ENCODE measurements at regions of chr1 and their contacts with region 1.

Region 1: DNA sequence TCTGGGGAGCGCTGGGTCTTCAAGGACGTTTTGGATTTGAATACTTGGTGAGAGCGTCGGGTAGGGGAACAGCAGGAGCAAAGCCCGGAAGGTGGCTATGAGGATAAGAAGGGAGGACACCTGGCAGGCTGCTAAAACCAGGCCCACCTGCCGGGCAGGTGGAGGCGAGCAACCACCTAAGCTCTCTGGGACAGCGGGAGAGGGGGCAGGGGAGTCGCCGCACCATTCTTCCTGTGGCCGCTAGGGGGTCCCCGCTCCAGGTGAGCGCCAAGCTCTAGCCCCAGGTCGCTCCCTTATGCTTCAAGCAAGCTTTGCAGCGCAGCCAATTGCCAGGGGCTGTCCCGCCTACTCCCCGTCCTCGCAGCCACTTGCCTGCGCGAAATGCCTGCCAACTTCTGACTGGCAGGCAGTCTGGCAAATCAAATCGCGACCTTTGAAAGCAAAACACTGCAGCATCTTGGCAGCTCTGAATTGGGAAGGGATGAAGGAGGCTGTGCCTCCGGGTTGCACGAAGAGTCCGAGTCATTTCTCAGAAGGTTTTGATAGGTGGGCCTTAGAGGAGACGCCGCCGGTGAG is at the start of gene NIPAL3:
- DNase-seq: peak; percentile 97
- CTCF ChIP-seq: peak; percentile 85

Region 2: GRCh38 chr1:24403806-24404205 is 11.6 kb before region 1 on chr1:
- CTCF ChIA-PET with region 1: interaction called, 29 read pairs
- POLR2A ChIA-PET with region 1: no interaction called
- DNase-seq: no peak
- CTCF ChIP-seq: no peak

Region 3: DNA sequence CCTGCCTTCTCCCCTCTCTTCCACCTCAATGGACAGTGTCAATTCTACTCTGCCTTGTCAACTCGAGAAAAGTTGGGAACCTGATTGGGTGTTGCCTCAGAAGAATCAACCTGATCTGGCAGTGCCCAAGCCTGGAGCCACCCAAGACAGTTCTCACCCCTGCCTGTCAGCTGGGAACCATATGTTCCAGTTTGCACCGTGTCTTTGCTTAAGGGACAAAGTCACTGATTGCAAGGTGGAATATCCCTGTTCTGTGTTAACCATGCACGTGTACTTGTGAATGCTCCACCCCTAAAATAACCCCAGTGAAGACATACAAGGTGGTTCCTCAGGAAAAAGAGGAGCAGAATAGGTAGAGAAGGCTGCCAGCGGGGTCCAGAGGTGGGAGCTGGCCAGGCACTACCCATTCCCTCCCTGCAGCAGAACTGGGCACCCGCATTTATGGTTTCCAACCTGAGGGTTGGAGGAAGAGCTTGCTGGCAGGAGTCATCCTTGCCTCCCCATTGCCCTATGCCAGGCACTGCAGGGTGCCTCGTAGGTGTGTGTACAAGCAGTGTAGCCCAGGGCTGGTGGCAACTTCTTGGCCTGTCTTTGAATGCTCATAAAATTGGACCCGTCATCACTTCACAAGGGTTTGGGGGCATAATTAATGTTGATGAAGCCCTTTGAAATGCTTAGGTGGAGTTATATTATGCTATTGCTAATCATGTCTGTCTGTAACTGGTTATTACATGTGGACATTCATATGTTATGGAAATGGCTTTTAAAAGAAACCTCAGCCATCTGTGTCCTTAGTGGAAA is 11.5 kb after region 1 on chr1:
- CTCF ChIA-PET with region 1: interaction called, 44 read pairs
- POLR2A ChIA-PET with region 1: no interaction called
- DNase-seq: peak; percentile 1
- CTCF ChIP-seq: no peak

Region 4: DNA sequence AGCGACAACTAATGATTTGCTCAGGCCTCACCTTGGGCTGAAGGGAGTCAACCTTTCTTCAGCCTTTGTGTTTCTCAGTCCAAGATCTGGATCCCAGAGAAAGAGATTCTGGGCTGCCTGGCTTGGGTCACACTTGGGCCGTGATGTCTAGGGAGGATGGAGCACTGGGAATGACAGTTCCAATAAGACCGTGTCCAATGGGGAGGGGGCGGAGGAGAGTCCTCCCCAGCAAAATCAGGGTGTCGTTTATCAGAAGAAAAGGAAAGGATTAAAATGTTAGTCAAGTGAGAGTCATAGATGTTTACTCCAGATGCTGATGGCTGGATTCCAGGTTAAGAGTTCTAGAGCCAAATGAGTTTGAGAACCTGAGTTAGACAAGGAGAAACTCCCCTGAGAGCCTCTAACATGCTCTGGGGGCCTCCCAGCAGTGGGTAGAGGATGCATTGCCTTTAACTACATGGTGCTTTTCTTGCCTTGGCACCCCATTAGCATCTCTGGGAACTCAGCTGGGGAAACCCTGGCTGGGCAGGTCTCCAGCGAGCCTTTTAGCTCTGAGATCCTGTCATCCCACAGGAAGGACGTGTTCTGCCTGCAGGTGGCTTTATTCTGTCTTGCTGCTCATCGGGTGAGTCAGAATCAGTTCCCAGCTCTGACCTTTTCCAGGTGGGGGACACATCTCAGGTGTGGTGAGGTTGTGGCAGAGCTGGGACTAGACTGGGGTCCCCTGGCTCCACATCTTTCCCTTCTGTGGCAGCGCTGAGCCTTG is 22.4 kb after region 1 on chr1:
- CTCF ChIA-PET with region 1: interaction called, 43 read pairs
- POLR2A ChIA-PET with region 1: no interaction called
- DNase-seq: no peak
- CTCF ChIP-seq: no peak

Measured in GM10248 (cell line).